ENCODE measurements at regions of chr20 and their contacts with region 1.

Region 1: DNA sequence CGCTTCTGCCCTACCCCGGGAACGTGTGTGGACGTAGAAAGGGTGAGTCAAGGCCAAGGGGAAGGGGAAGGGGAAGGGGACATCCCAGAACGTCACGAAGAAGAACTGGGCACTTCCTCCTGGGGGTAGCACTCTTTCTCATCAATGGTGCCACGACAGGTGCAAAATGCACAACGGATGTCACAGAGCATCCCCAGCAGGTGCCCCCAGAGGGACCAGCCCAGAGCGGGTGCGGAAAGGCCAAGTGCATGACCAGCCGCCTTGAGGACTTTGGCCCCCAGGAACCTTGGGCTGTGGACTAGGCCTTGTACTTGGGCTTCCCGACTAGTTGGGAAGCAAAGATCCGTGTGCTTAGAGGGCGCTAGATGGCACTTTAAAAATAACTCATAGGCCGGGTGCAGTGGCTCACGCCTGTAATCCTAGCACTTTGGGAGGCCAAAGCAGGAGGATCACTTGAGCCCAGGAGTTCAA is 12.1 kb upstream of the SRC start:
- DNase-seq: no peak
- H3K4me3 ChIP-seq: no peak overlapping the region
- H3K27ac ChIP-seq: no peak overlapping the region
- H3K4me1 ChIP-seq: peaks cover 0 to 4% of the 10 kb centered on the region in 2 donors
- H3K27me3 ChIP-seq: no peaks in the 10 kb centered on the region
- CTCF ChIP-seq: no peak
- POLR2A ChIP-seq: no peak

Region 2: DNA sequence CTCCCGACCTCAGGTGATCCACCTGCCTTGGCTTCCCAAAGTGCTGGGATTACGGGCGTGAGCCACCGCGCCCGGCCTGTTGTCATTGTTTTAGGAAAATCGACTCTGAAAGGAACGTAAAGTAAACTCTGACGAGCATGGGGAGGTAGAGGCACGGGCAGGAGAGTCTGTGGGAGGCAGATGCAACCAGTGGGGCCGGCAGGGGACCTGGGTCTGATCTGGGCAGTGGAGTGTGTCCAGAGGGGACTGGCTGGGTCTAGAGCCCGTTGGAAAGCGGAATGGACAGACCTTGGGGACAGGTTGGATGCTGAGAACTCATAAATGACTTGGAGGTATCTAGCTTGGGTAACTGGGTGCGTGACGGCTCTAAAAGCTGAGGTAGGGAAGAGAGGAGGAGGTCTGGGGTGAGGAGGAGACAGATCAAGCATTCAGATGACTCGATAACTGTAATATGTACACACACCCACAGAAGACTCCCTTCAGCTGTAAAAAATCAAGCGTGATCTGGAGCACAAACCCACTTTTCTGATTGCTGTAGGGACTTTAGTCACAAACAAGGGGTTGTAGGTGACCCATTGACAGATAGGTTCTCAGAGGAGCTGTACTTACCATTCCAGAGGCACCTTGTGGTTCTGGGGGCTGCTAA is 22.1 kb before region 1 on chr20:
- intact Hi-C with region 1: loop called (anchors 1 kb)
- DNase-seq: no peak
- H3K4me3 ChIP-seq: no peak overlapping the region
- H3K27ac ChIP-seq: peak overlapping the region; percentile 29 to 53
- H3K4me1 ChIP-seq: peaks cover 11 to 48% of the 10 kb centered on the region in 2 donors
- H3K27me3 ChIP-seq: no peaks in the 10 kb centered on the region
- CTCF ChIP-seq: no peak
- POLR2A ChIP-seq: no peak

Region 3: GRCh38 chr20:38692436-38693411 is 1358.8 kb after region 1 on chr20:
- intact Hi-C with region 1: no loop called
- DNase-seq: no peak
- H3K4me3 ChIP-seq: no peak overlapping the region
- H3K27ac ChIP-seq: no peak overlapping the region
- H3K4me1 ChIP-seq: no peaks in the 10 kb centered on the region
- H3K27me3 ChIP-seq: peaks cover 0 to 27% of the 10 kb centered on the region in 2 donors
- CTCF ChIP-seq: no peak
- POLR2A ChIP-seq: no peak

Measured in breast epithelium (tissue), 4 donors.